Activated CD4-positive, alpha-beta T cell treated with anti-CD3 and anti-CD28 coated beads, Interleukin-2, amount 10 ng/mL, durations not matched to agents 24 days and 14 days (primary cell): ENCODE measurements at regions of chr14 and their contacts with region 1.

Region 1: DNA sequence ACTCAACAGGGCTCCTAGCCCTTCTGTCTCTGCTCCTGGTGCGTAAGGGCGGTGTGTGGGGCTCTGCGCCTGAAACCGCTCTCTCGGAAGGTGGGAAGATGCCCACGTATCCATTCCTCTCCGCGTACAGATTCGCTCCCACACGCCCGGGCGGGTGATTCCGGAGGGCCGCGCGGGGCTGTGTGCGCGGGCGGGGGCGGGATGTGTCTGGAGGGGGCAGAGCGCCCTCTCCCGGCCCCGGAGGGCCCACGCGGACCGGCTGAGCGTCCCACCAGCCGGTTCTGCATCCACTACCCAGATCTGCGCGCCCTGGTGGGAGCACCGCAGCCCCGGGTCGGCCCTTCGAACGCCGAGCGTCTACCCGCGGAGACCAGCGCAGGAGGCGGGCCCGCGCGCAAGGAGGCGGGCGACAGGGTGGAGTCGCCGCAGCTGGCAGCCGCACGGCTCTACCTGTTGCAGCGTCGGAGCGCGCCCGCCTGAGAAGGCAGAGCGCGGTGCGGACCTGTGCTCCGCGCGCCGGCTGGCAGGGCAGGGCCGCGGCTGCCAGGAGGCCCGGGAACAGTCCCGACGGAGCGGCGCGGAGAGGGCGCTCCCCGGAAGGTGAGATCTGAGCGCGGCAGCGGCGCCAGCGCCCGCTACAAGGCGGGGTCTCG is 1.4 kb upstream of the KCNK13 start:
- DNase-seq: peak; percentile 88
- H3K4me3 Mint-ChIP-seq: peak overlapping the region; percentile 78
- H3K27ac Mint-ChIP-seq: no peak overlapping the region
- H3K4me1 Mint-ChIP-seq: peaks cover 16% of the 10 kb centered on the region
- H3K27me3 Mint-ChIP-seq: peaks cover 67% of the 10 kb centered on the region

Region 2: DNA sequence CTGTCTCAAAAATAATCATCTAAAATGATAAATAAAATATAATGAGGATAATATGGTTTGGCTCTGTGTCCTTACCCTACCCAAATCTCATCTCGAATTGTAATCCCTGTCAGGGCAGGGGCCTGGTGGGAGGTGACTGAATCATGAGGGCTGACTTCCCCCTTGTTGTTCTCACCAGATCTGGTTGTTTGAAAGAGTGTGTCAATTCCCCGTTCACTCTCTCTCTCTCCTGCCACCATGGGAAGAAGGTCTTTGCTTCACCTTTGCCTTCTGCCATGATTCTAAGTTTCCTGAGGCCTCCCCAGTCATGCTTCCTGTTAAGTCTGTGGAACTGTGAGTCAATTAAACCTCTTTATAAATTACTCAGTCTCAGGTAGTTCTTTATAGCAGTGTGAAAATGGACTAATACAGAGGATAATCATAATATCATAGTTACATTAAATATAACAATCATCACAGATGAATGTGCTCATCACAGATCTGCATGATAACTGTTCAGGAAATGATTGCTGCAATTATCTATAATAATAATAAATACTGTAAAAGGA is 118.5 kb before region 1 on chr14:
- intact Hi-C with region 1: loop called (anchors 2 kb)
- DNase-seq: peak; percentile 44
- H3K4me3 Mint-ChIP-seq: no peak overlapping the region
- H3K27ac Mint-ChIP-seq: peak overlapping the region; percentile 14
- H3K4me1 Mint-ChIP-seq: peaks cover 4% of the 10 kb centered on the region
- H3K27me3 Mint-ChIP-seq: no peaks in the 10 kb centered on the region

Region 3: GRCh38 chr14:89954070-89955028 is 106.1 kb before region 1 on chr14 and contains the start of gene EFCAB11:
- intact Hi-C with region 1: loop called (anchors 2 kb)
- DNase-seq: peak; percentile 99
- H3K4me3 Mint-ChIP-seq: peak within 1 kb of the TSS; percentile 90
- H3K27ac Mint-ChIP-seq: peak within 1 kb of the TSS; percentile 90
- H3K4me1 Mint-ChIP-seq: peaks cover 40% of the 10 kb centered on the region
- H3K27me3 Mint-ChIP-seq: no peaks in the 10 kb centered on the region
- total RNA-seq, gene EFCAB11: 6.8 and 7.8 TPM in 2 replicates

Region 4: GRCh38 chr14:89973234-89973823 is 87.1 kb before region 1 on chr14:
- intact Hi-C with region 1: loop called (anchors 1 kb)
- DNase-seq: peak; percentile 84
- H3K4me3 Mint-ChIP-seq: no peak overlapping the region
- H3K27ac Mint-ChIP-seq: no peak overlapping the region
- H3K4me1 Mint-ChIP-seq: peaks cover 4% of the 10 kb centered on the region
- H3K27me3 Mint-ChIP-seq: no peaks in the 10 kb centered on the region

Region 5: DNA sequence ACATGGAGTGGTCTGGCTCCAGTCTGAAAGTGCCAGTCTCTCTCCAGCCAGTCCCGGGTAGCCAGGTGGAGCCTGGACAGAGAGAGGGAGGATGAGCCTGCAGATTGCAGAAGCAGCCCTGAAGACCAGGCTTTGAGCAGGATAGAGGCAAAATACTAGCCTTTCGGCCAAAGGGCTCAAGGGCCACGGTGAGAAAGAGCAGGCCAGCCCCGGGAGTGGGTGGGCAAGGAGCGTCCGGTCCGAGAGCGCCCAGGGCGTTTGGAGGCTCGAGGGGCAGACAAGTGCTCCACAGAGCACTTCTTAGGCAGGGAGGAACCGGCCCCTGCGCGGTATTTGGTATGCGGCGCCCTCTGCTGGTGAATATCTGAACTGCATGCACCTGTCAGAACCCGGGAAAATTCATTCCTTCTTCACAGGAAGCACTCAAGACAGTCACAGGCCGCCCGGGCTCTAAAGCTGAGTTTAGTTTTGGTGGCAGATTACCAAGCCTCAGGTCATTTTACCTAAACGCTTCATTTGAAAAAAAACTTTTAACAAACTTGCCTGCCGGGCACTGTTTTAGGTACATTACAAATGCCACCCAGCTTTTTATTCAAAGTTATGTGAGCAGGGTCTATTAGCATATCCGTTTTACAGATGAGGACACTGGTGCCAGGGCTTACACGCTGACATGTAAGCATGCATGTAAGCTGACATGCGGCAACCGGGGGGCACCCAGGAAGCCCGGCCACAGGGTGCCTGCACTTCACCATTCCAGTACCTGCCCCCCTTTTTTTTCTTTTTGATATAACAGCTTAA is 174.9 kb after region 1 on chr14:
- intact Hi-C with region 1: loop called (anchors 2 kb)
- DNase-seq: peak; percentile 91
- H3K4me3 Mint-ChIP-seq: no peak overlapping the region
- H3K27ac Mint-ChIP-seq: no peak overlapping the region
- H3K4me1 Mint-ChIP-seq: peaks cover 3% of the 10 kb centered on the region
- H3K27me3 Mint-ChIP-seq: peaks cover 11% of the 10 kb centered on the region